GM10248 (cell line): ENCODE measurements at regions of chr5 and their contacts with region 1.

Region 1: DNA sequence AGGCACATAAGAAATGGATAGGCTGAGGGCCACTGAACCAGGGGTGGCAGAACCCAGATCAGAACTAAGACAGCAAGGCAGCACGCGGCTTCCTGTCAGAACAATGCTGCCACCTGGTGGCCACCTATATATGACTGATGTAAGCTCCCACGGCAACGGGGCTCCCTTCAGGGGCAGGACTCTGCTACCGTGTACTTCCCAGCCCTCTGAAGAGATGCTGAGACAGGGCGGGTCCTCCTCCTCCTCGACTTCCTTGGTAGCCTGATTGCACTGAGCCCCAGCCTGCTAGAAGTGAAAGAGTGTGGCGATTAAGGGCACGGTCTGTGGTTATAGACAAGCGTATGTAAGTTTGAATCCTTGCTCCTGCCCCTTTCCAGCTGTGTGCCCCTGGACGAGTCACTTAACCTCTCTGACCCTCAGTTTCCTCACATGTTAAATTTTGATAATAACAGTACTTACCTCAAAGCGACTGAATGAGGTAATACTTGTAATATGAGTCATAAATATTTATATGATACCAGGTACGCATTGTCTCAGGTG is 13.3 kb downstream of the RPS14 start:
- DNase-seq: peak; percentile 89
- CTCF ChIP-seq: peak; percentile 79

Region 2: GRCh38 chr5:150409638-150410523 is 26.3 kb before region 1 on chr5:
- CTCF ChIA-PET with region 1: interaction called, 222 read pairs
- POLR2A ChIA-PET with region 1: interaction called, 18 read pairs
- DNase-seq: peak; percentile 67
- CTCF ChIP-seq: no peak

Region 3: DNA sequence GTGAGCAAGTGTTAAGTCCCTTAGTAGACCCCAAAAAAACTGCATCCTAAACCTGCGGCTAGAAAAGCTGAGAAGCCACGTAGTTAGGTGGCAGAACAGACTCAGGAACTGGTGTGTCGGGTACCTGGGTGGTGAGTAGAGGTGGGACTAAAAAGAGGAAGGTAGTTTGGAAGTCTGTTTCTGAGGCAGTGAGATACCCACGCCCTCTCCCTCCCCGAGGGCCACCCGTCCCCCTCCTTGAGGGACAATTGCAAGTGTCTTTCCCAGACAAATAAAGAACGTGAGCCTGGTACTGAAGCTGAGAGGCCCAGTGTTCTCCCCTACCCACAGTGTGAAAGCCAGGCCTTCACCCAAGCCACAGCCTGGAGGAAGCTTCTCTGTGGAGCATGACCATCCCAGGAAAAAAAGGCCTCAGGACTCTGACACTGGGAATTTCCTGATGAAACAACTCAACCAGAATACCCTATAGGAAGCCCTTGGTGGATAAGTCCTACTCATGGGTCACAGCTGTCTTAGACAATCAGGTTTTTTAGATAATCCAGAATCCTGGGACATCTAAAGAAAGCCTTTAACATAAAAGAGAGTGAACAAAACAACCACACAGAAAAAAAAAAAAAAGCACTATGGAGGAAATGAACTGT is 16.5 kb before region 1 on chr5:
- CTCF ChIA-PET with region 1: interaction called, 25 read pairs
- POLR2A ChIA-PET with region 1: interaction called, 3 read pairs
- DNase-seq: no peak
- CTCF ChIP-seq: no peak